Left ventricle myocardium superior (tissue), 1 donor: ENCODE measurements at regions of chr11 and their contacts with region 1.

Region 1: GRCh38 chr11:101715281-101715680 is 131.5 kb upstream of the TRPC6 start:
- DNase-seq: no peak
- ATAC-seq: no peak

Region 2: GRCh38 chr11:101686558-101687242 is 28.6 kb before region 1 on chr11:
- intact Hi-C with region 1: loop called (anchors 2 kb)
- DNase-seq: no peak
- ATAC-seq: no peak